A673 (cell line): ENCODE measurements at regions of chr16 and their contacts with region 1.

Region 1: DNA sequence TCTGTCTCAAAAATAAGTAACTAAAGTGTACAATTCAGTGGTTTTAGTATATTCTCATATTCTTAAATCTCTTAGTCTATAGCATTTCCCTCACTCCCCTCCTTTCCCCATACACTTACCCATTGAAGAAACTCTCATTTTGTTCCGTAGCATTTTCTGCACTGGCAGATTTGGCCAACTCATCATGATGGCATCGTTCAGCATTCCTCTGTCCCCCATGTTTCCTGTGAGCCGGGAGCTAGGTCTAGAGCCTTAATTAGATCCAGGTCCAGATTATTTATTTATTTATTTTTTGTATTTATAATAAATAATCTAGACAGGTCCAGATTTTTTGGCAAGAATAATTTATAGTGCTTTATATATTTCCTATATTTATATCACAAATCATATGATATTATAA is 31.0 kb downstream of the HEATR3 start:
- DNase-seq: peak; percentile 35
- H3K4me3 ChIP-seq: no peak overlapping the region
- H3K27ac ChIP-seq: no peak overlapping the region
- H3K4me1 ChIP-seq: no peaks in the 10 kb centered on the region
- H3K27me3 ChIP-seq: no peaks in the 10 kb centered on the region
- CTCF ChIP-seq: no peak

Region 2: GRCh38 chr16:49836218-49836617 is 260.6 kb before region 1 on chr16:
- CTCF ChIA-PET with region 1: interaction called, 15 read pairs
- POLR2A ChIA-PET with region 1: no interaction called
- intact Hi-C with region 1: no loop called
- DNase-seq: no peak
- H3K4me3 ChIP-seq: no peak overlapping the region
- H3K27ac ChIP-seq: peak overlapping the region; percentile 72
- H3K4me1 ChIP-seq: peaks cover 38% of the 10 kb centered on the region
- H3K27me3 ChIP-seq: no peaks in the 10 kb centered on the region
- CTCF ChIP-seq: no peak

Region 3: DNA sequence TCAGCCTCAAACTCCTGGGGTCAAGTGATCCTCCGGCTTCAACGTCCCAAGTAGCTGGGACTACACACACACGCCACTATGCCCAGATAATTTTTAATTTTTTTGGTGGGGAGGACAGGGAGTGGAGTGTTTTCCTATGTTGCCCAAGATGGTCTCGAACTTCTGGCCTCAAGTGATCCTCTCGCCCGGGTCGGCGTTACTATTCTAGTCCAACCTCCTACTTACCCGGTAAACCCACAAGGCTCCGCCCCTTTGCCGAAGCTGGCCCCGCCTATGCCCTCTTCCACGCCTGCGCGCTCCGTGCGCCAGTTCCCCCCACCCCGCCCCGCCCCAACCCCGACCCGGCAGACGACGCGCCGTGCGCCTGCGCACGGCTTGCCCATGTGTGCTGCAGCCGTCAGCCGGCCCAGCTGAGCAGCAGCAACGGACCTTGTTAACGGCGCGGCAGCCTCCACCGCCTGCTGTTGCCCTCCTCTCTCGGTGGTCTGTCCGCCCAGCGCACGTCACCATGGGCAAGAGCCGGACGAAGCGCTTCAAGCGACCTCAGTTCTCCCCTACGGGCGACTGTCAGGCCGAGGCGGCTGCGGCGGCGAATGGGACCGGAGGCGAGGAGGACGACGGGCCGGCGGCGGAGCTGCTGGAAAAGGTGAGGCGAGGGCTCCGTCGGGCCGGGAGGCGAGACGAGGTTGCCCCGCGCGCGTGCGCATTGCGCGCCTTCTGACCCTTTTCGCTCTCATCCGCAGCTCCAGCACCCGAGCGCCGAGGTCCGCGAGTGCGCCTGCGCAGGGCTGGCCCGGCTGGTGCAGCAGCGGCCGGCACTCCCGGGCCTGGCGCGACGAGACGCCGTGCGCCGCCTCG is 30.9 kb before region 1 on chr16 and contains the start of gene HEATR3:
- CTCF ChIA-PET with region 1: no interaction called
- POLR2A ChIA-PET with region 1: interaction called, 11 read pairs
- intact Hi-C with region 1: no loop called
- DNase-seq: peak; percentile 94
- H3K4me3 ChIP-seq: peak within 1 kb of the TSS; percentile 78
- H3K27ac ChIP-seq: peak within 1 kb of the TSS; percentile 94
- H3K4me1 ChIP-seq: no peaks in the 10 kb centered on the region
- H3K27me3 ChIP-seq: no peaks in the 10 kb centered on the region
- CTCF ChIP-seq: no peak
- total RNA-seq, gene HEATR3: 29.4 and 41.8 TPM in 2 replicates